PC-9 (cell line): ENCODE measurements at regions of chr19 and their contacts with region 1.

Region 1: GRCh38 chr19:50368649-50369570 is 3.5 kb upstream of the NAPSA start:
- DNase-seq: peak; percentile 68 to 83
- H3K4me3 ChIP-seq: peak overlapping the region; percentile 84
- H3K27ac ChIP-seq: no peak overlapping the region
- H3K4me1 ChIP-seq: no peaks in the 10 kb centered on the region
- H3K27me3 ChIP-seq: no peaks in the 10 kb centered on the region
- CTCF ChIP-seq: peak; percentile 97

Region 2: GRCh38 chr19:50449236-50449899 is 80.5 kb after region 1 on chr19:
- CTCF ChIA-PET with region 1: no interaction called
- POLR2A ChIA-PET with region 1: interaction called, 10 read pairs
- intact Hi-C with region 1: no loop called
- DNase-seq: no peak
- H3K4me3 ChIP-seq: no peak overlapping the region
- H3K27ac ChIP-seq: no peak overlapping the region
- H3K4me1 ChIP-seq: no peaks in the 10 kb centered on the region
- H3K27me3 ChIP-seq: peaks cover 77% of the 10 kb centered on the region
- CTCF ChIP-seq: no peak

Region 3: GRCh38 chr19:50476224-50476942 is 107.5 kb after region 1 on chr19 and contains the starts of genes EMC10 and GARIN5A:
- CTCF ChIA-PET with region 1: no interaction called
- POLR2A ChIA-PET with region 1: no interaction called
- intact Hi-C with region 1: loop called (anchors 5 kb)
- DNase-seq: peak; percentile 90 to 96
- H3K4me3 ChIP-seq: peak within 1 kb of the TSS; percentile 72
- H3K27ac ChIP-seq: peak within 1 kb of the TSS; percentile 65
- H3K4me1 ChIP-seq: peaks cover 8% of the 10 kb centered on the region
- H3K27me3 ChIP-seq: no peaks in the 10 kb centered on the region
- CTCF ChIP-seq: no peak
- total RNA-seq, gene EMC10: 118 and 121 TPM in 2 replicates
- total RNA-seq, gene GARIN5A: 3.7 and 7.3 TPM in 2 replicates

Region 4: GRCh38 chr19:50537762-50538230 is 168.9 kb after region 1 on chr19:
- CTCF ChIA-PET with region 1: no interaction called
- POLR2A ChIA-PET with region 1: no interaction called
- intact Hi-C with region 1: loop called (anchors 10 kb)
- DNase-seq: peak; percentile 66 to 79
- H3K4me3 ChIP-seq: no peak overlapping the region
- H3K27ac ChIP-seq: no peak overlapping the region
- H3K4me1 ChIP-seq: no peaks in the 10 kb centered on the region
- H3K27me3 ChIP-seq: peaks cover 71% of the 10 kb centered on the region
- CTCF ChIP-seq: peak; percentile 86

Region 5: GRCh38 chr19:50777754-50778303 is 408.9 kb after region 1 on chr19:
- CTCF ChIA-PET with region 1: interaction called, 4 read pairs
- POLR2A ChIA-PET with region 1: no interaction called
- intact Hi-C with region 1: loop called (anchors 2 kb)
- DNase-seq: no peak
- H3K4me3 ChIP-seq: no peak overlapping the region
- H3K27ac ChIP-seq: no peak overlapping the region
- H3K4me1 ChIP-seq: no peaks in the 10 kb centered on the region
- H3K27me3 ChIP-seq: peaks cover 91% of the 10 kb centered on the region
- CTCF ChIP-seq: no peak